BJ (cell line): ENCODE measurements at regions of chr3 and their contacts with region 1.

Region 1: GRCh38 chr3:52845691-52846431 is 11.0 kb upstream of the MUSTN1 start:
- DNase-seq: no peak
- H3K4me3 ChIP-seq: no peak overlapping the region
- H3K27me3 ChIP-seq: no peaks in the 10 kb centered on the region
- CTCF ChIP-seq: peak; percentile 55

Region 2: GRCh38 chr3:52779011-52779836 is 66.6 kb before region 1 on chr3:
- CTCF ChIA-PET with region 1: no interaction called
- POLR2A ChIA-PET with region 1: no interaction called
- DNase-seq: no peak
- H3K4me3 ChIP-seq: no peak overlapping the region
- H3K27me3 ChIP-seq: peaks cover 23% of the 10 kb centered on the region
- CTCF ChIP-seq: no peak

Region 3: GRCh38 chr3:52834871-52835501 is 10.9 kb before region 1 on chr3 and contains the start of gene MUSTN1:
- CTCF ChIA-PET with region 1: interaction called, 30 read pairs
- POLR2A ChIA-PET with region 1: interaction called, 3 read pairs
- DNase-seq: no peak
- H3K4me3 ChIP-seq: no peak within 1 kb of the TSS
- H3K27me3 ChIP-seq: no peaks in the 10 kb centered on the region
- CTCF ChIP-seq: no peak
- polyA plus RNA-seq, gene MUSTN1: not detected in 2 replicates

Region 4: DNA sequence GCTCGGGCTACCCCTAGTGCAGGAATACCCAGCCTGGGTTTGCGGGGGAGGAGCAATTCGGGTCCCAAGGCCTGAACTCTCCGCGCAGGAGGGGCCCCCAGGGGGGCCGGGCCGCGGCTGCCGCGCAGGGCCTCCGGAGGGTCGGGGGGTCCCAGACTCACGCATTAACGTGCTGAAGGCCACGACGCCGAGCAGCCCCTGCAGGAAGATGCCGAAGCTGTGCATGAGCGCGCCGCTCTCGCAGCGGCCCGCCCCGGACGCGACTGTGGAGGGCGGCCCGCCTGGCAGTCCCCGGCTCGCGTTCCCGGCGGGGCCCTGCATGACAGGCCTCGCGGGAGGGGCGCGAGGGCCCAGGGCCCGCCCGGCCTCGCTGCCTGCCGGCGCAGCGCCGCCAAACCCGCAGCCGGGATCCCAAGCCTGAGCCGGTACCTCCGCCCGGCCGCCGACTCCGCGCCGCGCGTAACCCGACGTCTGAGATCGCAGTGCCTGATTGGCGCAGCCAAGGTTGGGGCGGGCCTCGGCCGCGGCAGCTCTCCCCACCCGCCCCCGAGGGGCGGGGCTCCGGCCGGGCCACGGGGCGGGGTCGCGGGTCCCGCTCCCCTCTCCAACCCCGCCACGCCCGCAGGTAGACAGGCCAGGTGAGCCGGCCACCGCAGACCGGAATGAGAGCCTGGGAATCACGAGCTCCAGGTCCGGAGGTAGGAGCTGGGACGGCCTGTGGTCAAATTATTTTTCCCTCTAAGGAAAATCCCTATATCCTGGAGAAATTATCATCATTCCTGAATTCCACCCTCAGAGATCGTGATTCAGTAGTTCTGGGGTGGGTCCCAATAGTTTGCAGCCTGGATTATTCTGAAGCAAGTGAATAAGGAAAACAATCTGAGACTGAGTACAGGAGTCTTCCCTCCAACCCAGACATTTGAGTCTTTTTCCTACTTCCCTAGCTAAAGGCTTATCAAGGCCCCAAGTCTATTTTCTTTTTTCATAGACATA is 51.6 kb after region 1 on chr3 and contains the start of gene STIMATE:
- CTCF ChIA-PET with region 1: interaction called, 3 read pairs
- POLR2A ChIA-PET with region 1: interaction called, 16 read pairs
- DNase-seq: peak; percentile 20
- H3K4me3 ChIP-seq: peak within 1 kb of the TSS; percentile 80
- H3K27me3 ChIP-seq: no peaks in the 10 kb centered on the region
- CTCF ChIP-seq: no peak
- polyA plus RNA-seq, gene STIMATE: 11.6 and 13.5 TPM in 2 replicates

Region 5: DNA sequence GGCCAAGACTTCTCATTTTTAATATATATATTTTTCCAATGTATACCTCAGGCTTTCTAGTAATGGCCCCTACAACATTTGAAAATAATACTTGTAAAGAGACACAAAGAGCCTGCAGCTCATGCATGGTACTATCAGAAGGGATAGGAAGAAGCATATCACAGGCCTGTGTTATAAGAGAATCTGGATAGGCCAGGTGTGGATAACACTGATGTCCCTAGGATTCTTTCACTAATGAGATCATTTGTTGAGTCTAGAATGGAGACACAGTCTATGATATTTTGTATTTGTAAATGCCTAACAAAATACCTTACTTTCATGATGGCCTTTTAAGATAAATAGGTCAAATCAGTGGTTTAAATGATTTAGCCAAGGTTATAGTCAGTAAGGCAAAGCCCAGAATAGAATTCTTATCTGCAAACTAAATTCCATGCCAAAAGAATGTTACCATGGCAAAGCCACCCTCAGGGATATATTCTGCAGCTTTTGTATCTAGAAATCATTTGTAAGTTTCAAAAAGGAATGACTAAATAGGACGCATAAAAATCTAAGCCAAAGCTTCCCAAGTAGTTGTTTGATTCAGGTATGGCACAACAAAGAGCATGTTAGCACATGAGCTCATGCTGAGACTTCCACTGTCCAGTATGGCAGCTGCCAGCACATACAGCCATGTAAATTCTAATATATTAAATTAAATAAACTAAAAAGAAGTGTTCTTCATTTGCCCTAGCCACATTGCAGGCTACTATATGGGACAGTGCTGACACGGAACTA is 491.5 kb after region 1 on chr3:
- CTCF ChIA-PET with region 1: no interaction called
- POLR2A ChIA-PET with region 1: no interaction called
- DNase-seq: no peak
- H3K4me3 ChIP-seq: no peak overlapping the region
- H3K27me3 ChIP-seq: no peaks in the 10 kb centered on the region
- CTCF ChIP-seq: no peak